ENCODE measurements at regions of chr16 and their contacts with region 1.

Region 1: GRCh38 chr16:86476956-86477530 is 33.3 kb upstream of the FOXF1 start:
- DNase-seq: no peak
- H3K4me3 ChIP-seq: no peak overlapping the region
- H3K27ac ChIP-seq: no peak overlapping the region
- H3K4me1 ChIP-seq: no peaks in the 10 kb centered on the region
- H3K27me3 ChIP-seq: peaks cover 0 to 83% (median 0%) of the 10 kb centered on the region in 7 donors
- CTCF ChIP-seq: no peak
- POLR2A ChIP-seq: no peak

Region 2: GRCh38 chr16:86457501-86458148 is 19.4 kb before region 1 on chr16:
- intact Hi-C with region 1: no loop called
- DNase-seq: no peak
- H3K4me3 ChIP-seq: no peak overlapping the region
- H3K27ac ChIP-seq: no peak overlapping the region
- H3K4me1 ChIP-seq: no peaks in the 10 kb centered on the region
- H3K27me3 ChIP-seq: peaks cover 0 to 84% (median 7%) of the 10 kb centered on the region in 7 donors
- CTCF ChIP-seq: no peak
- POLR2A ChIP-seq: no peak

Region 3: GRCh38 chr16:86604436-86605193 is 127.6 kb after region 1 on chr16:
- intact Hi-C with region 1: no loop called
- DNase-seq: no peak
- H3K4me3 ChIP-seq: peak overlapping the region; percentile 10 to 72 (median 34)
- H3K27ac ChIP-seq: peak overlapping the region in 5 of 8 donors; percentile 28 to 61 (median 54)
- H3K4me1 ChIP-seq: peaks cover 0 to 8% (median 2%) of the 10 kb centered on the region in 6 donors
- H3K27me3 ChIP-seq: peaks cover 0 to 12% (median 0%) of the 10 kb centered on the region in 7 donors
- CTCF ChIP-seq: no peak
- POLR2A ChIP-seq: no peak

Region 4: DNA sequence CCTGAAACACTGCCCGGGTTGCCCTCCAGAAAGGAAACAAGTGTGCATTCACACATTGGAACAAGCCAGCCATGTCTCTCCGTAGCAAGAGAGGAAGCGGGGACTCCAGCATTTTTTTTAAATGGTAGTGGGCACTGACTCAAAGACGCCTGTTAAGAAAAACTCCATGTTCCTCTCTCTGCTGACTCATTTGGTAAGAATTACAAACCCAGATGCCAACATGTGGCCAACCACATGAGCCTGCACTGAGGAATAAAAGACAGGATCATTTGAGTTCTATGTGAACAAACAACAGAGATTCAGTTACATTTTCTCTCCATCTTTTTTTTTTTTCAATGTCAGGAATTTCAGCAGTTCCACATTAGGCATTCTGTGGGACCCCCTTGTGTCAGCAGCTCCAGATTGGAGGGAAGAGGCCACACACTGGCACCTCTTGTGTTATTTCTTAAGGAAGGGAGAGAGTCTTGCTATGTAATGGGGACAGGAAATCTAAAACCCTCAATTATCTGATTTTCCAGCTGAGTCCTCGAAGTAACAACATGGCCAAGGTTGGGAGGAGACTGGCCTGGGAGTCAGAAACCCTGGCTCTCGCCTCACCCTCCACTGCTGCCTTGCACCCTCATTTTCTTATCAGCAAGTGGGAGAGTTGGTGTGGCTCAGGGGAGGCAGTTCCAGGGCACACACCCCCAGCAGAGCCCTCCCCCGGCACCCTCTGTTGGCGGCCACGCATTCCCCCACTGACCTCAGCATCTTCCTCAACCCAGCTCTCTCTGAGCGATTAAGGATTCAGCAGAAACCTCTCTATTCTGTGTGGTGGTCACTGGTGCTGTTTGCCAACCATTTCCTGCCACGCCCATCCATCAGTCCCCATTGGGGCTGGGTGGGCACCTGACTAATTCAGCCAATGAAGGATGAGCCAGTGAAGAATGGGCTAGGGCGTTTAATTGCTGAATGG is 274.3 kb after region 1 on chr16:
- intact Hi-C with region 1: loop called (anchors 10 kb)
- DNase-seq: peak; percentile 29
- H3K4me3 ChIP-seq: no peak overlapping the region
- H3K27ac ChIP-seq: no peak overlapping the region
- H3K4me1 ChIP-seq: no peaks in the 10 kb centered on the region
- H3K27me3 ChIP-seq: peaks cover 0 to 5% (median 0%) of the 10 kb centered on the region in 7 donors
- CTCF ChIP-seq: no peak
- POLR2A ChIP-seq: no peak

Measured in spleen (tissue), 13 donors.